Sigmoid colon (tissue), 7 donors: ENCODE measurements at regions of chr21 and their contacts with region 1.

Region 1: DNA sequence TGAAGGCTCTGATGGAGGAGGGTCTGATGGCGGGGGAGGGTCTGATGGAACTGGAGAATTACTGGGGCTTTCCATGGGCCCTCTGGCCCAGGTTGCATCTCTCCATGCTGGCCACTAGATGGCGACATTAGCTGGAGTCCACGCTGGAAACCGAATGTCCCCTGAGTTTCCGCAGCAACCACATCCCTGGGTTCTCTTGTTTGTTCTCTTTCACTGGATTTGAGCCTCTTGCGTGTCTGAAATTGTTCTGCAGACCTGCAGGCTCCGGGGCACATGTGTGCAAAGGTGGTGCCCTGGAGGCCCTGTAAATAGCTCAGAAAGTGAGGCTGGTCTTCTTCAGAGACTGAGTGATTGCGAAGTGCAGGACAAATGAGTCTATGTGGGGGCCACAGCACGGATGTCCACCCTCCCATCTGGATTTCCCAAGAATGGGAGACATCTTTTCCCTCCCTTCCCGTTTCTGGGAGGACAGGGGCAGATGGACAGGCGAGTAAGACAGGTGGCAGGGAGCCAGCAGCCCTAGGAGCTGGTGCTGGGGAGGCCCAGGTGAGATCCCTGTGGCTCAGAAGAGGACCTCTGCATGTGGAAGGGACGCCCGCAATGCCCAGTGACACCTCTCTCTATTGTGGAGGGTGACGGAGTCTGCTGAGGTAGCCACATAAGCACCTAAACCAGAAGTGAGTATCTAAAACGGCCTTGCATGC is 73.2 kb upstream of the ABCG1 start:
- DNase-seq: peak; percentile 79
- H3K4me3 ChIP-seq: no peak overlapping the region
- H3K27ac ChIP-seq: no peak overlapping the region
- H3K4me1 ChIP-seq: peaks cover 0 to 4% (median 2%) of the 10 kb centered on the region in 4 donors
- H3K27me3 ChIP-seq: peaks cover 0 to 5% (median 0%) of the 10 kb centered on the region in 3 donors
- CTCF ChIP-seq: peak; percentile 84 to 93 (median 91)
- EP300 ChIP-seq: no peak
- POLR2A ChIP-seq: no peak

Region 2: DNA sequence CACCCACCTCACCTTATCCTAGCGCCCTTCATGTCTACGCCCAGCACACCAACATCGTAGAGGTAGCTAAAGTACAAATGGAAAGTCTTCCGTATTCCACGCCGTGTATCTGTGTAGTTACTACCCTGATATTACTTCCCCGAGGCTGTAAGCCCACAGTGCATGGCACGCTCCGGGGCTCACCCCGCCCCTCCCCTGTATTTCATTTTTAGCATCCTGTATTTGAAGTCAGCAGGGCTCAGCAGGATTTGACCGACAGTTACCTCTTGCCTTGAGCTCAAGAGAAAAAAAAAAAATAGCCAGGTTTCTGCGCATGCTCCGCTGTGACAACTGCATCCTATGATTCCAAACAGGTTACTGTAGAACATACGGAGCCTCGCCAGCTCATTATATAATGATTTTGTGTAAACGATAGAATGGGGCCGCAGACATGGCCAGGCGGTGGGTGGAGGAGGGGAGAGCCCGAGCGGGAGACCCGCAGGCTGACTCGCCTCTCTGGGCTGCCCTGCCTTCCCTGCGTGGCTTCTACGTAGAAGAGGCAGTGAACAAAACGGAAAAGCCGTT is 74.5 kb after region 1 on chr21:
- intact Hi-C with region 1: loop called (anchors 10 kb)
- DNase-seq: peak; percentile 89
- H3K4me3 ChIP-seq: peak overlapping the region; percentile 66 to 74 (median 70)
- H3K27ac ChIP-seq: peak overlapping the region; percentile 77 to 91 (median 82)
- H3K4me1 ChIP-seq: peaks cover 0 to 42% (median 33%) of the 10 kb centered on the region in 4 donors
- H3K27me3 ChIP-seq: no peaks in the 10 kb centered on the region
- CTCF ChIP-seq: no peak
- EP300 ChIP-seq: peak in 3 of 4 donors; percentile 6 to 84 (median 52)
- POLR2A ChIP-seq: no peak

Region 3: DNA sequence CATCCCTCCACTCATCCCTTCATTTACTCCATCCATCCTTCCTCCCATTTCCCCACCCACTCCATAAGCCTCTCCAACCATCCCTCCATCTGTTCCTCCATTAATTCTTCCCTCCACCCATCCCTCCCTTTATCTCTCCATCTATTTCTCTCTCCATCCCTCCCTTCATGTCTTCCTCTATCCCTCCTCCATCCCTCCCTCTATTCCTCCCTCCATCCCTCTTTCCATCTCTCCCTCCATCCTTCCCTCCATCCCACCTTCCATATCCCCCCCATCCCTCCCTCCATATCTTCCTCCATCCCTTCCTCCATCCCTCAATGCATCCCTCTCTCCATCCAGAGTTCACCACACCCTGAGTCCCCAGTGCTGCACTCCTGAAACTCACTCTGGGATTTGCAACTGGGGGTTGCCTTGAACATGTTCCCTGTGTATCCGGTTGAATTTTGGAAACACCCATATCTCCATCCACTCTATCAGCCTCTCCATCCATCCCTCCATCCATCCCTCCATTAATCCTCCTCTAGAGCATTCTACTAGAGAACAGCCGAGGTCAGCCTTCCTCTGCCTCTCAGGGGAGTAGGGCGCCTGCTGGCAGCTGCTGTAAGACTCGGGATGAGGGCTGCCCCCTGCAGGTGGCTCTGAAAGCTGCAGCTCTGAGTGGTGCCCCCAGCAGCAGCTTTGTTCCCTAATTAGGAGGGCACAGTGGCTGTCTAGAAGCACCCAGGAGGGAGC is 112.6 kb after region 1 on chr21:
- intact Hi-C with region 1: loop called (anchors 1 kb)
- DNase-seq: peak; percentile 82
- H3K4me3 ChIP-seq: no peak overlapping the region
- H3K27ac ChIP-seq: no peak overlapping the region
- H3K4me1 ChIP-seq: peaks cover 0 to 39% (median 31%) of the 10 kb centered on the region in 4 donors
- H3K27me3 ChIP-seq: no peaks in the 10 kb centered on the region
- CTCF ChIP-seq: peak; percentile 19 to 83 (median 68)
- EP300 ChIP-seq: no peak
- POLR2A ChIP-seq: no peak

Region 4: GRCh38 chr21:42456457-42456856 is 310.7 kb after region 1 on chr21:
- intact Hi-C with region 1: loop called (anchors 10 kb)
- DNase-seq: no peak
- H3K4me3 ChIP-seq: no peak overlapping the region
- H3K27ac ChIP-seq: no peak overlapping the region
- H3K4me1 ChIP-seq: no peaks in the 10 kb centered on the region
- H3K27me3 ChIP-seq: no peaks in the 10 kb centered on the region
- CTCF ChIP-seq: no peak
- EP300 ChIP-seq: no peak
- POLR2A ChIP-seq: no peak

Region 5: DNA sequence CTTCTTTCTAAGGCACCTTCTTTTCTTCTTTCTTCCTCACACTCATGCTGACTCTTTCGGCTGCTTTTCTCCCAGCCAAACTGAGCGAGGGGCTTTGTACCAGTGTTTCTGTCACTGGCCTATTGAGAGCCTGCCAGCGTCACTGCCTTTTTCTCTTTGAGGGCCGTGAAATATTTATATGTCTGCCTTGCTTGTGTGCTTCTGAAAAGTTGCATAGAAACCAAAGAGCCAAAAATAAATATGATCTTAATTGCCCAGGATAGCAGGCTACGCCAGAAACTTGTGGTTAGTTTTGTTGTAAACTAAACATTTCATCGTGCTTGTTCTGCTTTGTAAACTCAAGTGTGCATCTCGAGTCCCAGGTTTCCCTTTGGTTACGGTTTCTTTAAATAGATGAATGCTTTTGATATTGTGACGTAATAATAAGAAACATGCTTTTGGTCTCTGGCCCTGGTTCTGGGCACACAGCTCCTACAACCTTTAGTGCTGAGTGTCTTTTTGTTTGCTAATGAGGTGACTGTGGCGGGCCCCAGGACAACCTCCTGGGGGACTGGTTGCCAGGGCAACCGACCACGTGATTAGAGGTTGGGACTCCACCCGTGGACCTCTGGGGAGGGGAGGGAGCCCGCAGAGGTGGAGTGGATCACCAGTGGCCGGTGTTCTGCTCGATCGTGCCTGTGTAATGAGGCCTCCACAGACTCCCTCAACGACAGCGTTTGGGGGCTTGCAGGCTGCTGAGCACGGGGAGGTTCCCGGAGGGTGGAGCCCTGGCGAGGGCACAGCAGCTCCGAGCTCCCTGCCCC is 378.8 kb after region 1 on chr21:
- intact Hi-C with region 1: loop called (anchors 10 kb)
- DNase-seq: peak; percentile 89
- H3K4me3 ChIP-seq: peak overlapping the region; percentile 8 to 41 (median 31)
- H3K27ac ChIP-seq: peak overlapping the region; percentile 64 to 78 (median 76)
- H3K4me1 ChIP-seq: peaks cover 0 to 30% (median 27%) of the 10 kb centered on the region in 4 donors
- H3K27me3 ChIP-seq: no peaks in the 10 kb centered on the region
- CTCF ChIP-seq: no peak
- EP300 ChIP-seq: no peak
- POLR2A ChIP-seq: no peak